ENCODE measurements at regions of chr20 and their contacts with region 1.

Region 1: DNA sequence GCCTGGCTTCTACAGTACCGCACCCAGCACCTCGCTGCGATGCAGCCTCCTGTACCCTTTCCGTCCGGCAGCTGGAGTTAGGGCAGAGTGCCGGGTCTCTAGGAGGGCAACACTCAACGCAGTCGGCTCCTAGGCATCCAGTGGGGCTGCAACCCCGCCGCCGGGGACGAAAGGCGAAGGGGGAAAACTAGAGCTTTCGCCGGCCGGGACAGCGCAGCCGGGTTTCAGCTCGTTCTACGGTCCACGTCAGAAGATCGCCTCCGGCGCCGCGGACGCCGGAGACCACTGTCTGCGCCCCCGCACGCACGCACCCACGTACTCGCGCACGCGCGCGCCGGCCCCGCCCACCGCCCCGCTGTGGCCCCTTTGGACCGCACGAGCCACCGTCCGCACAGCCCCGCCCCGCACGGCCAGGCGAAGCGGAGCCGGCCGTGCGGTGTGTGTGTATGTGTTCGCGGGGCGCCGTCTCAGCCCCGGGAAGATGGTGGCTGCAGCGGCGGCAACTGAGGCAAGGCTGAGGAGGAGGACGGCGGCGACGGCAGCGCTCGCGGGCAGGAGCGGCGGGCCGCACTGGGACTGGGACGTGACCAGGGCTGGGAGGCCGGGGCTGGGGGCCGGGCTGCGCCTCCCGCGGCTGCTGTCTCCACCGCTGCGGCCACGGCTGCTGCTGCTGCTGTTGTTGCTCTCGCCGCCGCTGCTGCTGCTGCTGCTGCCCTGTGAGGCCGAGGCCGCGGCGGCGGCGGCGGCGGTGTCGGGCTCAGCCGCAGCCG is at the start of gene ATRN:
- DNase-seq: peak; percentile 95 to 96
- ATAC-seq: peak; percentile 99
- H3K4me3 ChIP-seq: peak within 1 kb of the TSS; percentile 98
- H3K27ac ChIP-seq: peak within 1 kb of the TSS; percentile 83
- H3K4me1 ChIP-seq: peaks cover 19% of the 10 kb centered on the region
- H3K27me3 ChIP-seq: no peaks in the 10 kb centered on the region
- CTCF ChIP-seq: no peak
- total RNA-seq, gene ATRN: 14.7 to 18.6 (median 16.8) TPM

Region 2: GRCh38 chr20:3407771-3408637 is 62.8 kb before region 1 on chr20:
- intact Hi-C with region 1: loop called (anchors 5 kb)
- DNase-seq: peak; percentile 76 to 83
- ATAC-seq: peak; percentile 80 to 84 (median 82)
- H3K4me3 ChIP-seq: peak overlapping the region; percentile 75
- H3K27ac ChIP-seq: peak overlapping the region; percentile 84
- H3K4me1 ChIP-seq: no peaks in the 10 kb centered on the region
- H3K27me3 ChIP-seq: no peaks in the 10 kb centered on the region
- CTCF ChIP-seq: no peak